A673 (cell line): ENCODE measurements at regions of chr1 and their contacts with region 1.

Region 1: DNA sequence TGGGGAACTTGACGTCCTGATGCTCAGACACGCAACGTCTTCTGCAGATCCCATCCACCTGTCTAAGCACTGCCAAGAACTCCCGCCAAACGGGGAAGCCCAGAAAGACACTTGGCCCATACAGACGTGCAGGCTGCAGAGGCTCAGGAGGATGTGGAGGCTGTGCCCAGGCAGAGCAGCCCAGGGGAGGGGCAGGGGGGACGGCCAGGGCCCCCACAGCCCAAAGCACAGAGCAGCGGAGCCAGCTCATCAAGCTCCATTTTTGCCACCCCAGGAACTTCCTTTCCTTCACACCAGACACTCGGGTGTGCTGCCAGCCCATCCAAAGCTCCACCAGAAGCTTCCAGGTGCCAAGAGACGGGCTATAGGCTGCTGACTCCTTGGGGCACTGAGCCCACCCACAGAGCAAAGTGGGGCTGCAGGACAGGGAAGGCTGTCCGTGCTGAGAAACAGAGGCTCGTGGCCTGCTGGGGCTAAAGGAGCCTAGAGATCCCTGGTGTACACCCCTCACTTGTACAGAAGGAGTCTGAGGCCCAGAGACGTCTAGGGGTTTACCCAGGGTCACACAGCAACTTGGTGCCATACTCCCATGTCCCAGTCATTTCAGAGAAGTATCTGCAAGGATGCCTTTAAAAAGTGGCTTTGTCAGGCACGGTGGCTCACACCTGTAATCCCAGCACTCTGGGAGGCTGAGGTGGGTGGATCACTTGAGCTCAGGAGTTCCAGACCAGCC is 59.1 kb downstream of the ACOT7 start:
- DNase-seq: no peak
- H3K4me3 ChIP-seq: no peak overlapping the region
- H3K27ac ChIP-seq: no peak overlapping the region
- H3K4me1 ChIP-seq: no peaks in the 10 kb centered on the region
- H3K27me3 ChIP-seq: no peaks in the 10 kb centered on the region
- CTCF ChIP-seq: no peak

Region 2: DNA sequence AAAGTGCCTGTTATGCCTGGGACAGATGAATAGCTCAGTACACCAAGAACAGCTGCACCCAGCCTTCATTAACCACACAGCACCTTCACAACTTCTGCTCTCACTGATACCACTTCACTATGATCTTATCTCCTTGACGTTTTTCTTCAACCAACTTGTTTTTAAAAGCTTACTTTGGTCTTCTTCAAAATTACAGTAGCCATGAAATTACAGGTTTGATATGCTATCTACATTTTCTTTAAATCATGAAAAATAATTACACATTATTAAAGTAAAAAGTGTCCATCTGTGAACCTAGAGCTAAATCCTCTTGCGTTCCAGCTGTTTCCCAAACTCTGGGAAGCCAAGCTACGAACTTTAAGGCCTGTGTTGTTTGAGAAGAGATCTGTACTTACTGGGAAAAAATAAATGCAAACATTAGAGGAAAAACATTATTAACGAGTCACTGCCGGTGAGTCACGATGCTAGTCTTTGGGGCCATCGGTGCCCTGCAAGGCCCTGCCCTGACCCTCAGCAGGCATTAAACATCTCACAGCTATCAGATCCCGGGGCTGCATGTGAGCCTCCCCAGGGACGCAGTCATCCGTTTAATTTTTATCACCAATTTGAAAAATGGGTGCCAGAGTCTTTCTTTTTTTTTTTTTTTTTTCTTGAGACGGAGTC is 17.2 kb before region 1 on chr1:
- CTCF ChIA-PET with region 1: interaction called, 18 read pairs
- POLR2A ChIA-PET with region 1: no interaction called
- intact Hi-C with region 1: no loop called
- DNase-seq: no peak
- H3K4me3 ChIP-seq: no peak overlapping the region
- H3K27ac ChIP-seq: no peak overlapping the region
- H3K4me1 ChIP-seq: no peaks in the 10 kb centered on the region
- H3K27me3 ChIP-seq: no peaks in the 10 kb centered on the region
- CTCF ChIP-seq: no peak

Region 3: GRCh38 chr1:6393400-6394187 is 59.2 kb after region 1 on chr1 and contains the start of gene ACOT7:
- CTCF ChIA-PET with region 1: no interaction called
- POLR2A ChIA-PET with region 1: no interaction called
- intact Hi-C with region 1: no loop called
- DNase-seq: peak; percentile 92
- H3K4me3 ChIP-seq: peak within 1 kb of the TSS; percentile 72
- H3K27ac ChIP-seq: peak within 1 kb of the TSS; percentile 93
- H3K4me1 ChIP-seq: peaks cover 14% of the 10 kb centered on the region
- H3K27me3 ChIP-seq: no peaks in the 10 kb centered on the region
- CTCF ChIP-seq: 0 out of 2 replicates have a peak, but pooled peaks have one; percentile 11
- total RNA-seq, gene ACOT7: 129 and 132 TPM in 2 replicates